ENCODE measurements at regions of chr5 and their contacts with region 1.

Region 1: GRCh38 chr5:92927291-92927778 is 653.7 kb downstream of the NR2F1-AS1 start:
- DNase-seq: peak in 6 of 10 donors; percentile 10 to 51 (median 39)
- H3K4me3 ChIP-seq: peak overlapping the region in 1 of 59 donors; percentile 1
- H3K27ac ChIP-seq: peak overlapping the region in 27 of 59 donors; percentile 0 to 69 (median 28)
- H3K27me3 ChIP-seq: no peaks in the 10 kb centered on the region
- CTCF ChIP-seq: peak in 1 of 56 donors; percentile 8

Region 2: GRCh38 chr5:92969781-92970237 is 42.5 kb after region 1 on chr5:
- intact Hi-C with region 1: loop called in 1 of 2 experiments (anchors 1 kb)
- DNase-seq: peak in 2 of 10 donors; percentile 52 to 59
- H3K4me3 ChIP-seq: peak overlapping the region in 12 of 59 donors; percentile 8 to 38 (median 18)
- H3K27ac ChIP-seq: peak overlapping the region in 58 of 59 donors; percentile 11 to 95 (median 84)
- H3K27me3 ChIP-seq: no peaks in the 10 kb centered on the region
- CTCF ChIP-seq: peak in 4 of 56 donors; percentile 3 to 26 (median 9)